PC-9 (cell line): ENCODE measurements at regions of chr11 and their contacts with region 1.

Region 1: DNA sequence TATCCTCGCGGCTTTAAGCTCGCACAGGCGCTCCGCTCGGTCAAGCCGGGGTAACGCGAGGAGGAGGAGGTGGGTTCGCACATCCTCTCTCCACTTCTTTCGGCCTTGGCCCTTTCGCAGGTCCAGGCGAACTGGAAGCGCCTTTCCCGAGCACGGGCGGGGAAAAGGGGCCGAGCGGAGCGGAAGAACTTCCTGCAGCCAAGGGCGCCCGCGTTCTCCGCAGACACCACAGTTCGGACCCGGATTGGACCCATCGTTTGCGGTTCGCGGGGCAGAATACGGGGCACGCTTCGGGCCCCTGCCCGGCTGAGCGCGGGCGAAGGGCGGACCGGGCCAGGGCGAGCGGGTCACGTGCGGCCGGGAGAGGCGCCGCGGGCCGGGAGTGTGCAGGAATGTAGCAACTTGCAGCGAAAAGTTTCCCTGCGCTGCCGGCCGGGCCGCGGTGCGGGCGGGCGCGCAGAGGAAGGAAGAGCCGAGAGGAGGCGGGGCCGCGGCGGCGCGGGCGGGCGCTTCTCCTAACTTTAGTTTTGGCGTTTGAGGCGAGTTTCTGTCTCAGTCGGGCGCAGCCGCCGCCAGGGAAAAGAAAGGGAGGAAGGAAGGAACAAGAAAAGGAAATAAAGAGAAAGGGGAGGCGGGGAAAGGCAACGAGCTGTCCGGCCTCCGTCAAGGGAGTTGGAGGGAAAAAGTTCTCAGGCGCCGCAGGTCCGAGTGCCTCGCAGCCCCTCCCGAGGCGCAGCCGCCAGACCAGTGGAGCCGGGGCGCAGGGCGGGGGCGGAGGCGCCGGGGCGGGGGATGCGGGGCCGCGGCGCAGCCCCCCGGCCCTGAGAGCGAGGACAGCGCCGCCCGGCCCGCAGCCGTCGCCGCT is at the start of gene YAP1:
- DNase-seq: peak; percentile 80 to 90
- H3K4me3 ChIP-seq: peak within 1 kb of the TSS; percentile 72
- H3K27ac ChIP-seq: peak within 1 kb of the TSS; percentile 96
- H3K4me1 ChIP-seq: peaks cover 38% of the 10 kb centered on the region
- H3K27me3 ChIP-seq: no peaks in the 10 kb centered on the region
- CTCF ChIP-seq: no peak
- total RNA-seq, gene YAP1: 101 and 111 TPM in 2 replicates

Region 2: GRCh38 chr11:101860696-101861427 is 249.3 kb before region 1 on chr11:
- CTCF ChIA-PET with region 1: no interaction called
- POLR2A ChIA-PET with region 1: no interaction called
- intact Hi-C with region 1: loop called (anchors 5 kb)
- DNase-seq: peak; percentile 30 to 68
- H3K4me3 ChIP-seq: no peak overlapping the region
- H3K27ac ChIP-seq: no peak overlapping the region
- H3K4me1 ChIP-seq: peaks cover 20% of the 10 kb centered on the region
- H3K27me3 ChIP-seq: no peaks in the 10 kb centered on the region
- CTCF ChIP-seq: peak; percentile 89

Region 3: DNA sequence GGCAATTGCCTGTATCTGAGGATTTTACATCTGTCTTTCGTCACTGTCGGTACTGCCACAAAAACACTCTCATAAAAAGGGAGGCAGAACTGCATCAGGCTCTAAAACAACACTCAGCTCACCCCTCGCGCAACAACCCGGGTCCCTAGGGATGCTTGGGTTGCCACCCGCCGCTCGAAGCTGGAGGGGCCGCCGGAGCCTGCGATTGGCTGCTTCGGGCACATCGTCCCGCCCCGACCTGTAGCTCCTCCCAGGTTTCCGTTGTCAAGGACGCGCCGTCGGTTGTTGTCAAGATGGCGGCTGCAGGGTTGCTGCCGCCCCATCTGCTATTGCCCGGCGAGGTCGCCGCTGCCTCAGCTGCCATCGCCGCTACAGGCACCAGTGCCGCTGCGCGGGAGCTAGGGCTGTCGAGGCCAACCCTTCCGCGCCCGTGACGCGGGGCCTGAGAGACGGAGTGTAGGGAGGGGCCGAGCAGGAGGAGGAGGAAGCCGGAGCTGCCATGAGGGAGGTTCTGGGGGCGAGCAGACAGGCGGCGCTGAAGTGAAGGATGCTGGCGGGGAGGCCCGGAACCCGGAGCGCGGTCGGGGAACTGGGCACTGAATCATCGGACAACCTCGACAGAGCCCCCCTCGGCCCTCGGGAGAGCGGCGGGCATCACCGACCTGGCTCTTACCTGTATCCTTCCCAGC is 195.2 kb before region 1 on chr11 and contains the start of gene CEP126:
- CTCF ChIA-PET with region 1: no interaction called
- POLR2A ChIA-PET with region 1: no interaction called
- intact Hi-C with region 1: loop called (anchors 2 kb)
- DNase-seq: peak; percentile 84 to 91
- H3K4me3 ChIP-seq: peak within 1 kb of the TSS; percentile 69
- H3K27ac ChIP-seq: peak within 1 kb of the TSS; percentile 65
- H3K4me1 ChIP-seq: peaks cover 28% of the 10 kb centered on the region
- H3K27me3 ChIP-seq: no peaks in the 10 kb centered on the region
- CTCF ChIP-seq: peak; percentile 57; the same call in 1 of the 2 replicates
- total RNA-seq, gene CEP126: 3.7 and 6.0 TPM in 2 replicates

Region 4: GRCh38 chr11:102017026-102017425 is 93.1 kb before region 1 on chr11:
- CTCF ChIA-PET with region 1: no interaction called
- POLR2A ChIA-PET with region 1: no interaction called
- intact Hi-C with region 1: no loop called
- DNase-seq: no peak
- H3K4me3 ChIP-seq: no peak overlapping the region
- H3K27ac ChIP-seq: no peak overlapping the region
- H3K4me1 ChIP-seq: peaks cover 15% of the 10 kb centered on the region
- H3K27me3 ChIP-seq: no peaks in the 10 kb centered on the region
- CTCF ChIP-seq: no peak

Region 5: GRCh38 chr11:102097186-102097585 is 12.9 kb before region 1 on chr11:
- CTCF ChIA-PET with region 1: no interaction called
- POLR2A ChIA-PET with region 1: no interaction called
- intact Hi-C with region 1: no loop called
- DNase-seq: no peak
- H3K4me3 ChIP-seq: no peak overlapping the region
- H3K27ac ChIP-seq: no peak overlapping the region
- H3K4me1 ChIP-seq: no peaks in the 10 kb centered on the region
- H3K27me3 ChIP-seq: no peaks in the 10 kb centered on the region
- CTCF ChIP-seq: no peak

Region 6: GRCh38 chr11:102157219-102157618 is 47.1 kb after region 1 on chr11:
- CTCF ChIA-PET with region 1: no interaction called
- POLR2A ChIA-PET with region 1: no interaction called
- intact Hi-C with region 1: loop called (anchors 5 kb)
- DNase-seq: peak; percentile 15 to 58
- H3K4me3 ChIP-seq: no peak overlapping the region
- H3K27ac ChIP-seq: peak overlapping the region; percentile 81
- H3K4me1 ChIP-seq: peaks cover 64% of the 10 kb centered on the region
- H3K27me3 ChIP-seq: no peaks in the 10 kb centered on the region
- CTCF ChIP-seq: no peak

Region 7: DNA sequence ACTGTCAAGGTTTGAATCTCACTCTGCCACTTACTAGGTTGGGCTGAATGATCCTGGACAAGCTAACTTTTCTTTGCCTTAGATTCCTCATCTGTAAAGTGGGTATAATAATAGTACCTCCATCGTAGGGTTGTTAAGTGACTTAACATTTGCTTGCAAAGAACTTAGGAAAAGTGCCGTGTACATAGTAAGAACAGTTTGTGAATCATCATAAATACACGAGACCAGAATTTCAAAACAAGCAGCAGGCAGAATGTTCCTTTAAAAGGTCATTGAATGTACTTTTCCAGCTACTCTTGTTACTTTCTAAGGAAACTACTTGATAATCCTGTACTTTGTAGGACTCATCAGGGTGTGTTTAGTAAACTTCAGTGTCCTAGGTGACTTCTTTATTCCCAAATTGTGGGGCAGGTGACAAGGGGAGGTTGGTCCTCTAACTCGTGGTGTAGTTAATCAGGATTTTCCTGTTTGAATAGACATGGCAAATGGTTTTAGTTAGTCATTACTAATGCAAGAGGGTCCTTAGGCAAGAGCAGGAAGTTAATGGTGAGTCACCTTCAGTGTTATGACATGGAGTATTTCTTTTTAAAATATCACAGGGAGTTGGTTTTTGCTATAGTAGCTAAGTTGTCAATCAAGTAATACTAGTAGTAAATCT is 68.0 kb after region 1 on chr11:
- CTCF ChIA-PET with region 1: no interaction called
- POLR2A ChIA-PET with region 1: no interaction called
- intact Hi-C with region 1: loop called (anchors 1 kb)
- DNase-seq: peak; percentile 61 to 100
- H3K4me3 ChIP-seq: peak overlapping the region; percentile 10; the same call in 1 of the 2 replicates
- H3K27ac ChIP-seq: peak overlapping the region; percentile 88
- H3K4me1 ChIP-seq: peaks cover 41% of the 10 kb centered on the region
- H3K27me3 ChIP-seq: no peaks in the 10 kb centered on the region
- CTCF ChIP-seq: no peak

Region 8: GRCh38 chr11:102225689-102226568 is 115.8 kb after region 1 on chr11:
- CTCF ChIA-PET with region 1: interaction called, 7 read pairs
- POLR2A ChIA-PET with region 1: no interaction called
- intact Hi-C with region 1: loop called (anchors 2 kb)
- DNase-seq: peak; percentile 8 to 52
- H3K4me3 ChIP-seq: 0 out of 2 replicates have a peak overlapping the region, but pooled peaks have one; percentile 15
- H3K27ac ChIP-seq: peak overlapping the region; percentile 59
- H3K4me1 ChIP-seq: peaks cover 59% of the 10 kb centered on the region
- H3K27me3 ChIP-seq: no peaks in the 10 kb centered on the region
- CTCF ChIP-seq: no peak

Region 9: GRCh38 chr11:102287964-102288724 is 178.0 kb after region 1 on chr11:
- CTCF ChIA-PET with region 1: no interaction called
- POLR2A ChIA-PET with region 1: no interaction called
- intact Hi-C with region 1: loop called (anchors 5 kb)
- DNase-seq: peak; percentile 38 to 67
- H3K4me3 ChIP-seq: no peak overlapping the region
- H3K27ac ChIP-seq: no peak overlapping the region
- H3K4me1 ChIP-seq: peaks cover 24% of the 10 kb centered on the region
- H3K27me3 ChIP-seq: no peaks in the 10 kb centered on the region
- CTCF ChIP-seq: peak; percentile 92

Region 10: DNA sequence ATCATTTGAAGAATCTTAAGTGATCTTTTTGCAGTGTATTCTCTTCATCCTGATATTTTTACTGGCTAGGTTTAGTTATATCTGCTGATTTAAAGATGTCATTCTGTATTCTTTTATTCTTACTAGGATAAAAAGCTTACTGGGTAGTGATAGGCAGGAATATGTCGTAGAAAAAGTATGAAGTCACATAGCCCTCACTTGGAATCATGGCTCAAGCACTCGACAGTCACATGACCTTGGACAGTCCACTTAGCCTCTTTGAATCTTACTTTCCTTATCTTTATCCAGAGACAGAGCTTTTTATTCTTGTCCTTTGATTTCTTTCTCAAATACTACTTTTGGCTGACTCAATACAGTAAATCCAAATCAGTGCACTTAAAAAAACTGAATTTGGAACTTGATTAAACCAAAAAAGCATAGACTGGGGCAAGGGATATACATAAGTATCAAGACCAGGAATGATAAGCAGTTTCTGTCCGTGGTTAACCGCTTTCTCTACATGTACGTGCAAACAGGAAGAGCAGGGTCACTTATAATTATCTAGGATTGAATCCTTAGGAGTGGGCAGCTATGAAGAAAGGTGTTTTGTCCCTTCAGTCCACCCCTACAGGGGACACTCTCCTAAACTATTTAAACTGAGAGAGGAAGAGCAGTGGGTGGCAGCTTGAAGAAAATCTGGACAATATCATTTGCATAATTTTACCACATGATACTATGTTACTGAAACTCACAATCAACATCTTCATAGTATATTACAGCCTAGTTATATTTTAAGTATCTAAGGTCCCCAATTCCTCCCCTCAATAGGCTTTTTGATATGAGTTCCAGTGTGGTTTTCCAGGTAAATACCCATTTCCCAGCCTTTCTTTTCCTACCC is 412.4 kb after region 1 on chr11:
- CTCF ChIA-PET with region 1: no interaction called
- POLR2A ChIA-PET with region 1: no interaction called
- intact Hi-C with region 1: no loop called
- DNase-seq: no peak
- H3K4me3 ChIP-seq: no peak overlapping the region
- H3K27ac ChIP-seq: no peak overlapping the region
- H3K4me1 ChIP-seq: 0 out of 2 replicates have a peak, but pooled peaks cover under 1% of the 10 kb centered on the region
- H3K27me3 ChIP-seq: no peaks in the 10 kb centered on the region
- CTCF ChIP-seq: no peak